PC-3 (cell line): ENCODE measurements at regions of chr11 and their contacts with region 1.

Region 1: GRCh38 chr11:74570266-74571061 is 21.9 kb upstream of the POLD3 start:
- DNase-seq: peak; percentile 85
- ATAC-seq: peak; percentile 86
- H3K4me3 ChIP-seq: no peak overlapping the region
- H3K27ac ChIP-seq: no peak overlapping the region
- H3K4me1 ChIP-seq: peaks cover 5% of the 10 kb centered on the region; the same call in 1 of the 2 replicates
- H3K27me3 ChIP-seq: no peaks in the 10 kb centered on the region
- CTCF ChIP-seq: peak; percentile 97

Region 2: DNA sequence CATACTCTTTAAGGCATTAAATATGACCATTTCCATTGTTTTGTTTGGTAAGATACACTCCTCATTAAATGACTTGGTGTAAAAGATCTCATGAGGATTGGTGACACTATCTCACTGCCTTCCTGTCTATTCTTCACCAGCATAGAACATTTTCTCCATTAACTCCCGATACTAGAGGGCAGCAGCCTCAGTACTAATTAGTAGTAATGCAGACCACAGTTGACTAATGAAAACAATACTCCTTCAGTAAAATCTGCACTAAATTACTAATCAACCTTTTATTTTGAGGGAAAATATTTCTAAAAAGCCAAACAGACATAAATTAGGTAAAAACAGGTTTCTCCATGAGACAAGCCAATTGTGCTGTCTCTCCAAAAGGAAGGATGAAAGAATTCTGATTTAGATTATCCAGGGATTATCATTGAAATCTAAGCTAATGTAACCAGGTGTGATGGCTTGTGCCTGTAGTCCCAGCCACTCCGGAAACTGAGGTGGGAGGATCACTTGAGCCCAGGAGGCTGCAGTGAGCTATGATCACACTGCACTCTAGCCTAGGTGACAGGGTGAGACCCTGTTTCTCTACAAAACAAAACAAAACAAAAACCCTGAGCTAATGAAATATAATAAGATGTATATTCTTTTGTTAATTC is 181.7 kb before region 1 on chr11:
- CTCF ChIA-PET with region 1: no interaction called
- POLR2A ChIA-PET with region 1: no interaction called
- intact Hi-C with region 1: loop called (anchors 2 kb)
- DNase-seq: peak; percentile 87
- ATAC-seq: peak; percentile 95
- H3K4me3 ChIP-seq: no peak overlapping the region
- H3K27ac ChIP-seq: no peak overlapping the region
- H3K4me1 ChIP-seq: peaks cover 4% of the 10 kb centered on the region
- H3K27me3 ChIP-seq: no peaks in the 10 kb centered on the region
- CTCF ChIP-seq: peak; percentile 98

Region 3: GRCh38 chr11:74487875-74488274 is 82.6 kb before region 1 on chr11:
- CTCF ChIA-PET with region 1: interaction called, 3 read pairs
- POLR2A ChIA-PET with region 1: no interaction called
- intact Hi-C with region 1: loop called (anchors 1 kb)
- DNase-seq: peak; percentile 59
- ATAC-seq: peak; percentile 71
- H3K4me3 ChIP-seq: no peak overlapping the region
- H3K27ac ChIP-seq: no peak overlapping the region
- H3K4me1 ChIP-seq: peaks cover 6% of the 10 kb centered on the region
- H3K27me3 ChIP-seq: no peaks in the 10 kb centered on the region
- CTCF ChIP-seq: peak; percentile 78

Region 4: DNA sequence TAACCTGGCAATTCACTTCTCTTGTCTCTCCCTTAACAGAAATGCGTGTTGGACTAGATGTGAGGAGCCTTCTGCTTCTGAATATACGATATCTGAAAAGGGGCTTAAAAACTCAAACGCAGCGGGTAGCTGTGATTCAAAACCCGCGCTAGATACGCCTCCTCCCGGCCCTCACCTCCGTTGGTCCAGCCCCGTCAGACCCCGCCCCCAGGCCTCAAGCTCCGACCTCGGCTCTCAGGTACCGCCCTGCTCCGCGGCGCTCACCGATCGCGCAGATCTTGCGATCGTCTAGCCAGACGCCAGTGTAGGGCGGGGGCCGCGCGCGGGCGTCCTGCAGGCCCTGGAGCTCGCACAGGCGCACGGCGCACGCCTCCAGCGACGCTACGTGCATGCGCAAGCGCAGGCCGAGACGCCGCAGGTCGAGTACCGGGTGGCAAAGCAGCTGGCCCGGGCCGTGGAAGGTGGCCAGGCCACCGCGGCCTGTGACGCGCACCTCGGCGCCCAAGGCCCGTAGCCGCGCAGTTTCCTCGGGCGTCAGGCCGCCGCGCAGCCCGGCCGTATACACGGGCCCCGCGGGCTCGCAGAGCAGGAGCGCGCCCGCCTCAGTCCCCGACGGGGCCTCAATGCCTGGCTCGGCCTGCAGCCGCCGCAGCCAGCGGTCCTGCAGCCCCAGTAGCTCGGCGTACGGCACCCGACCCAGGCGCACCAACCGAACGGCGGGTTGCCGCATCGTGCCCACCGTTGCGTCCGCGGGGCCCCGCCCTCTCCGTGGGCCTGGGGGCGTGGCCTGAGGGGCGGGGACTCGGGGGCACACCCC is 77.3 kb before region 1 on chr11 and contains the start of gene LIPT2:
- CTCF ChIA-PET with region 1: interaction called, 10 read pairs
- POLR2A ChIA-PET with region 1: interaction called, 7 read pairs
- intact Hi-C with region 1: loop called (anchors 1 kb)
- DNase-seq: peak; percentile 99
- ATAC-seq: peak; percentile 98
- H3K4me3 ChIP-seq: peak within 1 kb of the TSS; percentile 92
- H3K27ac ChIP-seq: peak within 1 kb of the TSS; percentile 92
- H3K4me1 ChIP-seq: peaks cover 17% of the 10 kb centered on the region
- H3K27me3 ChIP-seq: no peaks in the 10 kb centered on the region
- CTCF ChIP-seq: no peak
- total RNA-seq, gene LIPT2: 9.4 and 11.3 TPM in 2 replicates

Region 5: GRCh38 chr11:74520927-74521665 is 49.4 kb before region 1 on chr11:
- CTCF ChIA-PET with region 1: interaction called, 5 read pairs
- POLR2A ChIA-PET with region 1: no interaction called
- intact Hi-C with region 1: loop called (anchors 10 kb)
- DNase-seq: no peak
- ATAC-seq: no peak
- H3K4me3 ChIP-seq: no peak overlapping the region
- H3K27ac ChIP-seq: no peak overlapping the region
- H3K4me1 ChIP-seq: peaks cover 14% of the 10 kb centered on the region
- H3K27me3 ChIP-seq: no peaks in the 10 kb centered on the region
- CTCF ChIP-seq: no peak